Motor neuron (in vitro differentiated cells): ENCODE measurements at regions of chr1 and their contacts with region 1.

Region 1: DNA sequence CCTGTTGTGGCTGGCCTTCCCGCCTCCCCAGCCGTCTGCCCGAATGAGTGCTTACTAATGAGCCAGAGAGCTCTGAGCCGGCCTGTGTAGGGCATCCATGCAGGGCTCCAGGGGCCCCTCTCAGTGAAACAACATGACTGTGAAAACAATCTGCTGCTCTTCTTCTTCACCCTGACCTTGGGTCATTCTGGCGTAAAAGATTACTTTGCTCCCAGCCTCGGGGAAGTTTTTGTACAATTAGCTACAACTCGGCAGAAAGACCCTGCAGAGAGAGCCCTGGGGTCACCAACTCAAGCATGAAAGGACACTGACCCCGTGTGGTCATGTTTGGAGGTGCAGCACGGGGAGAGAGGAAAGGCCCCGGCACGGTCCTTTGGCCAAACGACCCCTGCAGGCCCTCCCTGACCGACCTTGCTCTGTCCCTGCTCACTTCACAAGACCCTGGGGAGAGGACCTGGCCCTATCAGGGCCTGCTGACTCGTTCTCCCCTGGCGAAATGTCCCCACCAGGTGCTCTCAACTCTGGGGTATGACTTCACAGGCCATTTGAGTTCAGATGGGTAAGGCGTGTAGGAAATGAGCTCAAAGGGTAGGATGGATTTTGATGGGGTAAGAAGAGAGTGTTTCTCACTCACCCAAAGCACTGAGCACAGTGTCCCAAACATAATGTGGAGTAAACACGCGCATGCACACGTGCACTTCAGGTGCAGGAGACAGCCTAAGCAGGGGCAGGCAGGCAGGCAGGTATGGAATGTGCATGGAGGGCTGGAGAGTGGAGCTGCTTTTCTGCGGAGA is 22.9 kb upstream of the FAM20B start:
- ATAC-seq: peak; percentile 75 to 97 (median 94)
- H3K4me3 ChIP-seq: no peak overlapping the region
- H3K27ac ChIP-seq: no peak overlapping the region
- H3K4me1 ChIP-seq: no peaks in the 10 kb centered on the region

Region 2: DNA sequence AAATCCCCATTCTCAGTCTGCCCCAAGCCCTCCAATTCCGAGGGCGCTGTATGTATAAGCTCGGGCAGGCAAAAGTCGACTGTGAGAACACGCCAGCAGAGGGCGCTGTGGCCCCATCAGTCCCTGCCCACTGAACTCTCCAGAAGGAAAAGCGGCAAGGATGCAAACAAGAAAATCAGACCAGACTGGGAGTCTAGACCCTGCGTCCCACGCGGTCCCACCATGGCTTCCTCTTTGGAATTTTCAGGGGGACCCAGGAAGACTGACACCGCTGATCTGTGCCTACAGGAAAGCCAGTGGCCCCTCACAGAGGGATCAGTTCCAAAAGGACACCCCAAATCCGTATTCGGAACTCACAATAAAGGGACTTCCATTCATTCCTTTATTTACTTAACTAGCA is 470.4 kb before region 1 on chr1:
- in situ Hi-C with region 1: loop called in 7 of 9 experiments (anchors 10 to 25 kb)
- ATAC-seq: peak; percentile 57 to 99 (median 83)
- H3K4me3 ChIP-seq: no peak overlapping the region
- H3K27ac ChIP-seq: no peak overlapping the region
- H3K4me1 ChIP-seq: peaks cover 0 to 7% of the 10 kb centered on the region in 2 donors

Region 3: GRCh38 chr1:178774263-178774662 is 228.5 kb before region 1 on chr1:
- in situ Hi-C with region 1: loop called in 3 of 9 experiments (anchors 10 to 25 kb)
- ATAC-seq: peak in 2 of 8 experiments; percentile 19 to 44
- H3K4me3 ChIP-seq: no peak overlapping the region
- H3K27ac ChIP-seq: no peak overlapping the region
- H3K4me1 ChIP-seq: no peaks in the 10 kb centered on the region